ENCODE measurements at regions of chr20 and their contacts with region 1.

Region 1: DNA sequence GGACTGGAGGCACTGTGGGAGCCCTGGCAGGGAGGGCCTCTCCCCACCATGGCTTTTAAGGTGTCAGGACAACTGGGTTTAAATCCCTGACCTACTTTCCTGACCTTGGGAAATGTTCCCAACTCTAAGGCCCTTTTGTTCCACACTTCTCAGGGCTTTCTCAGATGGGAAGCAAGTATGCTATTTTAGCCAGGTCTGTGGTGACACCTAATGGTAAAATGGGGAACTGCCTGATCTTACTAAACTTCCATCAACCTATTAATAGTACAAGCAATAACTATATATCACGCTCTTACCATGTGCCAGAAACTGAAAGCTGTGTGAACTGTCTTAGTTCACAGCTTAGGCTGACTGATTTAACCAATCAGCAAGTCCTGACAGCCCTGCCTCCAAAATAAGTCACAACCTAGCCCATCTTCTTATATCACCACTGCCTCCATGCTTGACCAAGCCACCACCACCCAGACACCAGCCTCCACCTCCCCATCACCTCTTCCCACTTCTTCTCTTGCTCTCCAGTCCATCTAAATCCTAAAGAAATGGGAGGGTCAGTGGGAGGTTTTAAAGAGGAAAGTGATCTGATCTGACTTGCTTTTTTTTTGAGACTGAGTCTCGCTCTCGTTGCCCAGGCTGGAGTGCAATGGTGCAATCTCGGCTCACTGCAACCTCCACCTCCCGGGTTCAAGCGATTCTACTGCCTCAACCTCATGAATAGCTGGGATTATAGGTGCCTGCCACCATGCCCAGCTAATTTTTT is 6.9 kb upstream of the BLCAP start:
- DNase-seq: peak; percentile 36
- H3K4me3 Mint-ChIP-seq: no peak overlapping the region
- H3K27ac Mint-ChIP-seq: no peak overlapping the region
- H3K4me1 Mint-ChIP-seq: peaks cover 7% of the 10 kb centered on the region
- H3K27me3 Mint-ChIP-seq: peaks cover 5% of the 10 kb centered on the region

Region 2: GRCh38 chr20:37192137-37192854 is 342.3 kb before region 1 on chr20:
- intact Hi-C with region 1: loop called (anchors 1 kb)
- DNase-seq: peak; percentile 55
- H3K4me3 Mint-ChIP-seq: no peak overlapping the region
- H3K27ac Mint-ChIP-seq: peak overlapping the region; percentile 43
- H3K4me1 Mint-ChIP-seq: peaks cover 70% of the 10 kb centered on the region
- H3K27me3 Mint-ChIP-seq: no peaks in the 10 kb centered on the region

Region 3: DNA sequence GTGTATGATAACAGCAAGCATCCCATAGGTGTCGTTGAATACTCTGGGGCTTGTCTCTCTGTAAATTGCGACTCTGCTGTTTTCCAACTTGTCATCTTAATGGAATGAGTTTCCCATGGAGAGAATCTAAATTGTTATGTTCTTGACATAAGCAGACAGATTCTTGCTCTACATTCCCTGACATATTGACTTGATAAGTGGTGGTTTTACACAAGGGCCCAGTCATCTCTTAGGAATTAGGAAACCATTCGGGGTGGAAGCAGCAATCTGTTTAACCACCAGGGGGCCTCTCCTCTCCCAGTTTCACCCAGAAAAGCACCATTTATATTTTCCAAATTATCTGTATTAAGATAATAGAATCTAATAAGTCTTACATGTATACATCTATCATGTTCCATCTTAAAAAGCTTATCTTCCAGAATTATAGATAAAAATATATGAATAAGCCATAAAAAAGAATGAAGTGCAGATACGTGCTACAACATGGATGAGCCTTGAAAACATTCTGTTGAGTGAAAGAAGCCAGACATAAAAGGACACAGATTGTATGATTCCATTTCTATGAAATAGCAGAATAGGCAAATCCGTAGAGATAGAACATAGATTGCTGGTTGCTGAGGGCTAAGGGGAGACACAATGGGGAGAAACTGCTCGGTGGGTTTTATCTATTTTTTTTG is 332.2 kb before region 1 on chr20:
- intact Hi-C with region 1: loop called (anchors 1 kb)
- DNase-seq: no peak
- H3K4me3 Mint-ChIP-seq: no peak overlapping the region
- H3K27ac Mint-ChIP-seq: no peak overlapping the region
- H3K4me1 Mint-ChIP-seq: peaks cover 12% of the 10 kb centered on the region
- H3K27me3 Mint-ChIP-seq: no peaks in the 10 kb centered on the region

Region 4: DNA sequence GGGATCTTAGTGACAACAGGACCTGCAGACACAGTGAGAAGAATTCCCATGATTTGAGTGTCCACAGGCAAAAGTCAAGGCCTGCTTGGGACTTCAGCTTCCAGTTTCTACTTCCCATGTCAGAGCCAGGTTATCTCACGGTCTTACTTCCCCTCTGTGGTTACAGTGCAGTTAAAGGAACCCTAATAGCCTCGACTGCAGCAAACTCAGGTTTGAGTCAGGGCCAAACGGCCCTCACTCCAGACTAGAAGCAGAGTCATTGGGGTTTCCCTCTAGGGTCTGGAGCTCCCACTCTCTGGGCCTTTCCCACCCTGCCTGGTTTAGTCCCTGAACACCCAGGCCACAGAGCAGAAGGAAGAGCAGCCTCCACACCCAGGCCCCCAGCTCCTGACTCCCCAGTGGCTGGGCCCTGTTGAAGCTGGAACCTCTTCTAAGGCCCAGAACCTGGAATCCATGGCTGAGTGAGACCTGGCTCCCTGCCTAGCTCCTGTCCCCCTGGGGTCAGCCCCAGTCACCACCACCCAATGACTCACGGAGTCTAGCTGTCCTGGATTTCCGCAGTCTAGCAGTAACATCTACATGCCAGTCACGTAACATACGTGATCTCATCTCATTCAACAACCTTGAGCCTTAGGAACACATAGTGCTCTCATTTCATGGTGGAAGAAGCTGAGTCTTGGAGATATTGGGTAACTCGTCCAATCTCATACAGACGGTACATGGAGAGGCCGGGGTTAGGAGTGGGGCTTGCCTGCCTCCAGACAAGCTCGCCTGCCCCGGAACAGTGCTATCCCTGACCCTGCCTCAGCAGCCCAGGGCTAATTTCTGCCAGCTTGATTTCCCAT is 263.8 kb before region 1 on chr20:
- intact Hi-C with region 1: loop called (anchors 1 kb)
- DNase-seq: no peak
- H3K4me3 Mint-ChIP-seq: no peak overlapping the region
- H3K27ac Mint-ChIP-seq: no peak overlapping the region
- H3K4me1 Mint-ChIP-seq: peaks cover 5% of the 10 kb centered on the region
- H3K27me3 Mint-ChIP-seq: no peaks in the 10 kb centered on the region

Region 5: GRCh38 chr20:37384683-37385174 is 149.8 kb before region 1 on chr20:
- intact Hi-C with region 1: loop called (anchors 1 kb)
- DNase-seq: peak; percentile 78
- H3K4me3 Mint-ChIP-seq: peak overlapping the region; percentile 84
- H3K27ac Mint-ChIP-seq: no peak overlapping the region
- H3K4me1 Mint-ChIP-seq: peaks cover 6% of the 10 kb centered on the region
- H3K27me3 Mint-ChIP-seq: peaks cover 9% of the 10 kb centered on the region

Region 6: GRCh38 chr20:37392421-37393178 is 142.0 kb before region 1 on chr20:
- intact Hi-C with region 1: loop called (anchors 1 kb)
- DNase-seq: no peak
- H3K4me3 Mint-ChIP-seq: no peak overlapping the region
- H3K27ac Mint-ChIP-seq: no peak overlapping the region
- H3K4me1 Mint-ChIP-seq: no peaks in the 10 kb centered on the region
- H3K27me3 Mint-ChIP-seq: no peaks in the 10 kb centered on the region

Measured in activated T-helper 1 cell treated with anti-CD3 and anti-CD28 coated beads, Interleukin-12 subunit alpha, Interleukin-12 subunit beta, Interleukin-2, Interleukin-4 antibody, amounts not matched to agents 30 ng/mL and 10 ng/mL and 1 ng/mL, durations not matched to agents 14 hours and 24 hours and 36 hours (primary cell).